ENCODE measurements at regions of chr2 and their contacts with region 1.

Region 1: DNA sequence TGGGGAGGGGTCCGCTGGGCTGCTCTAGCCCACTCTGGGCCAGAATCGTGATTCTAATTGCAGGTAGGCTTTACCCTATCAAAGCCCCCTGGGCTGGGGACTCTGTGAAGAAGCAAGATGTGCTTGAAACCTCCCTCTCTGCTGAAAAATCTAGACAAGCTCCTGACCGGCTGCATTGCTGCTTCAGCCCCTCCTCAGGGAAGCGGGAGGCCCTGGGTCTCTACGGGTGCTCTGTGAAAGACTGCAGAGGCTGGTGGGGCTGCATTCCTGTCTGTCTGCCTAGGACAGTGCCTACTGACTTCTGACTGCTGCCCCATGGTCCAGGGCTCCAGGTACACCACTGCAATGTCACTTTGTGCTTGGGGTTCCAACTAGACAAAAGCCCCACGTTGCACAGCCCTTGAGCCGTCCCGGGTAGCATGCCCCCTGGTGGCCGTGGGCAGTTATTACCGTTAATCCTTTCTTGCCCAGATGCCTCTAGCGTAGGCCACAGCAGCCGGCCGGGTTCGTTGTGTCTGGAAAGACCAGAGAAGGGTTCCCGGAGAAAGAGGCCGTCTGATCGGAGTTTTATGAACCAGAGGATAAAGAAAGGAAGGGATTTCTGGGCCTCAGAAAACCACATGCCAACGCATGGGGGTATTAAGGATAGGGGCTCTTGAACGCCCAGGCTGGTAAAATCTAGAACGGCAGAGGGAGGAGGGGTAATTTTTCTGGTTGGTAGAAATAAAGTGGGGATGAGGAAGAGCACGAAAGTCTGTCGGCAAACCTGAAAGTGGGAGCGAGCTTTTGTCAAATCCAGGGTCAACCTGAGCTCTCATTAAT is 15.9 kb upstream of the C1QL2 start:
- DNase-seq: peak; percentile 55
- H3K4me3 Mint-ChIP-seq: no peak overlapping the region
- H3K27ac Mint-ChIP-seq: no peak overlapping the region
- H3K4me1 Mint-ChIP-seq: peaks cover 11% of the 10 kb centered on the region
- H3K27me3 Mint-ChIP-seq: peaks cover 1% of the 10 kb centered on the region
- CTCF ChIP-seq: peak; percentile 73

Region 2: GRCh38 chr2:119028327-119029174 is 145.9 kb before region 1 on chr2:
- CTCF ChIA-PET with region 1: interaction called, 3 read pairs
- POLR2A ChIA-PET with region 1: no interaction called
- intact Hi-C with region 1: loop called (anchors 5 kb)
- DNase-seq: peak; percentile 65
- H3K4me3 Mint-ChIP-seq: no peak overlapping the region
- H3K27ac Mint-ChIP-seq: no peak overlapping the region
- H3K4me1 Mint-ChIP-seq: no peaks in the 10 kb centered on the region
- H3K27me3 Mint-ChIP-seq: peaks cover 48% of the 10 kb centered on the region
- CTCF ChIP-seq: peak; percentile 37

Region 3: DNA sequence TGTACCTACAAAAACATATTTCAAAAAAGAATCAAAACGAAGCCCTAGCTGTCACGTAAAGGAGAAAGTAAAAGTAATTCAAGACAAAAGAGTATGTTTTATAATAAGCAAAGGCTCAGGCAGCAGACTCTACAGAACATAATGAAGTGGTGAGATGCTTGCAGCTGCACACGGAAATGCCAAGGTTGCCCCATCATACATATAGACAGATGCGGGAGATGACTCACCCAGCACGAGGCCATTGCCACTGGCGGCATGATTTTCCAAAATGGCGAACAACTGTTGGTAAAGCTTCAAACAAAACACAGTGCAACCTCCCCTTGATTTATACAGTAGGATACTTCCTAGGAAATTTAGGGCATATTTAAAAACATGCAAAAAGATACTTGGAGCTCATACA is 10.1 kb after region 1 on chr2:
- CTCF ChIA-PET with region 1: interaction called, 10 read pairs
- POLR2A ChIA-PET with region 1: interaction called, 3 read pairs
- intact Hi-C with region 1: no loop called
- DNase-seq: peak; percentile 74
- H3K4me3 Mint-ChIP-seq: no peak overlapping the region
- H3K27ac Mint-ChIP-seq: peak overlapping the region; percentile 41
- H3K4me1 Mint-ChIP-seq: peaks cover 7% of the 10 kb centered on the region
- H3K27me3 Mint-ChIP-seq: no peaks in the 10 kb centered on the region
- CTCF ChIP-seq: no peak

Region 4: GRCh38 chr2:119190722-119191121 is 16.3 kb after region 1 on chr2:
- CTCF ChIA-PET with region 1: interaction called, 10 read pairs
- POLR2A ChIA-PET with region 1: interaction called, 3 read pairs
- intact Hi-C with region 1: no loop called
- DNase-seq: no peak
- H3K4me3 Mint-ChIP-seq: no peak overlapping the region
- H3K27ac Mint-ChIP-seq: no peak overlapping the region
- H3K4me1 Mint-ChIP-seq: peaks cover 20% of the 10 kb centered on the region
- H3K27me3 Mint-ChIP-seq: no peaks in the 10 kb centered on the region
- CTCF ChIP-seq: no peak

Measured in MCF 10A (cell line).